ENCODE measurements at regions of chr9 and their contacts with region 1.

Region 1: DNA sequence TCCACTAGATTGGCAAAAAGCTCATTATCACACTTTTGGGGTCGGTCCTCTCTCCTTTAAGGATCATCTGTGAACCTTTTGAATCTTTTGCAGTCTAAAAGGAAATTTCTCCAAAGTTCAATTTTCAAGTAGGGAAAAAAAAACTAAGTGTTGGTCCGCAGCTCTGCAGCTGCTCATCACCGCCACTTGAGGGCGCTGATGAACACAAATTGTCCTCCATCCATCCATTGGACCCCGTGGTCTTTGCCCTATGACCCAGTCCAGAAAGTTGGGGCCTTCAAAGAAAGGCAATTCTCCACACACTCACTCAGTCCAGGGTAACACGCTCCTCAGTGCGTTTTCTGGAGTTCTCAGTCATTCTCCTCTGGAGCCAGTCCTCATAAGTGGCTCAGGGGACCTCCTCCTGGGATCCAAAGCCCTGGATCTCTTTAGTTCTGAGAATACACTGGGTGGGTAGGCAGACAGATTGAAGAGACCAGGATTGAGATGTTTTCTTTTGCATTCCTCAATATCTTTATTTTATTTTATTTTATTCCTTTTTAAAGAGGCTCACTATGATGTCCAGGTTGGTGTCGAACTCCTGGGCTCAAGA is 63.6 kb upstream of the SLC28A3 start:
- DNase-seq: no peak
- H3K4me3 ChIP-seq: no peak overlapping the region
- H3K27ac ChIP-seq: no peak overlapping the region
- H3K4me1 ChIP-seq: no peaks in the 10 kb centered on the region
- H3K27me3 ChIP-seq: no peaks in the 10 kb centered on the region
- CTCF ChIP-seq: peak in 5 of 6 experiments; percentile 41 to 50 (median 44)
- POLR2A ChIP-seq: no peak

Region 2: GRCh38 chr9:84617411-84618029 is 213.3 kb after region 1 on chr9:
- intact Hi-C with region 1: no loop called
- DNase-seq: no peak
- H3K4me3 ChIP-seq: no peak overlapping the region
- H3K27ac ChIP-seq: no peak overlapping the region
- H3K4me1 ChIP-seq: no peaks in the 10 kb centered on the region
- H3K27me3 ChIP-seq: no peaks in the 10 kb centered on the region
- CTCF ChIP-seq: no peak
- POLR2A ChIP-seq: no peak

Region 3: GRCh38 chr9:84953797-84954705 is 549.9 kb after region 1 on chr9:
- intact Hi-C with region 1: loop called in 1 of 2 experiments (anchors 10 kb)
- DNase-seq: peak; percentile 60 to 89 (median 76)
- H3K4me3 ChIP-seq: no peak overlapping the region
- H3K27ac ChIP-seq: no peak overlapping the region
- H3K4me1 ChIP-seq: no peaks in the 10 kb centered on the region
- H3K27me3 ChIP-seq: no peaks in the 10 kb centered on the region
- CTCF ChIP-seq: peak; percentile 77 to 94 (median 86)
- POLR2A ChIP-seq: no peak

Region 4: DNA sequence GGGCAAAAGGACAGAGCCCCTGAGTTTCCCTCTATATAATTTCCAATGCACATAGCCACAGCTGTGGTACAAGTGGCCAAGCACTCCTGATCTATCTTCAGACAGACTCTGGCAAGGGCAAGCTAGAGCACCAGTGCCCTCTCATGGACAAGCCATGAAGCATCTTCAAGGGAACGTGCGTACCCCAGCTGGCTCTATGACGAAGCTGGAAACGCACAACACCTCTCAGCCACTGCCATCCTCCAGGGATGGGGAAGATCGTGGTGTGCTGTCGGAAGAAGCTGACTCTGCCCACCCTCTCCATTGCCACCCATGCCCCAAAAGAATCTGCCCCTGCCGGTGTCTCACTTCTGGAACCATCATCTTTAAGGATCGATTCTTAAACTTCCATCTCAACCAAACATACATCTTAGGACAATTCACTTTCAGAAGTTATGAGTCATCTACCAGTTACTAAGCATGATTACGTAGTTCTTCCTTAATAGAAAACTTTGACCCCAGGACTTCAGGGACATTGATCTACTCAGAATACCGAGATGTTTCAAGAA is 854.7 kb after region 1 on chr9:
- intact Hi-C with region 1: loop called (anchors 10 kb)
- DNase-seq: peak; percentile 55 to 82 (median 63)
- H3K4me3 ChIP-seq: no peak overlapping the region
- H3K27ac ChIP-seq: no peak overlapping the region
- H3K4me1 ChIP-seq: peaks cover 0 to 11% of the 10 kb centered on the region in 2 donors
- H3K27me3 ChIP-seq: peaks cover 4% of the 10 kb centered on the region
- CTCF ChIP-seq: peak; percentile 24 to 66 (median 60)
- POLR2A ChIP-seq: no peak

Measured in adrenal gland (tissue), 19 donors.